HEK293T (cell line): ENCODE measurements at regions of chr2 and their contacts with region 1.

Region 1: DNA sequence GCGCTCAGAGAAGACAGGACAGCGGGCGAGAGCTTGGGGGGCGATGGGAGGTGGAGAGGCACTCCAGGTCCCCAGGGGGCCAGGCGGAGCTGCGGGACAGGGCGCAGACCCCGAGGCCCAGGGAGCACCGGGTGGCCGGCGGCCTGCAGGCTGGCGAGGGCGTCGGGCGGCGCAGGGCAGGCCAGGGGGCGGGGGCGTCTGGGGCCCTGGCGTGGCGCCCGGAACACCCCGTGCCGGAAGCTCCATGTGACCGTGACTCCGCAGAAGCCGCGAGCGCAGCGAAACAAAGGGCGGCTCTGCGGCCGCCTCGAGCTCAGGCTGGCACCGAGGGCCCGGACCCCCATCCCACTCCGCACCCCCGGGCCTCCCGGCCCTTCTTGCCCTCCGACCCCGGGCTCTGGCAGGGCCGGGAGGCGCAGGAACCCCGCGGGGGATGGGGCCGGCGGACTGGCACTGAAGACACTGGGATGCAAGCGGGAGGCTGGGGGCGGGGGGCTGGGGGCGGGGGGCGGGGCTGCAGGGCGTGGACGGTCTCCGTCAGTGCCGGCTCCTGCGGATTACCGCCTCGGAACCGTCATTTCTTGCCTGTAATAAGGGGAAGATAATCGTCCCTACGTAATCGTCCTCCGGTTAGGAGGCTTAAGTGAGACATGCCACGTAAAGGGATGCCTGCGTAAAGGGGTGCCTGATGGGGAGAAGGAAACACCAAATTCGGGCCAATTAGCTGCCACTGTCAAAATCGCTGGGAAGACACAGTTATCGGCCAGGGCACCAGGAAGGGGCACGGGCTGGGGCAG is 19.2 kb downstream of the SH2D6 start:
- DNase-seq: peak; percentile 62

Region 2: GRCh38 chr2:85524336-85524933 is 86.7 kb after region 1 on chr2:
- CTCF ChIA-PET with region 1: no interaction called
- POLR2A ChIA-PET with region 1: interaction called, 14 read pairs
- DNase-seq: peak; percentile 48